ENCODE measurements at regions of chr6 and their contacts with region 1.

Region 1: GRCh38 chr6:84227434-84228197 is at the start of gene CEP162:
- DNase-seq: peak; percentile 88 to 93 (median 90)
- H3K4me3 ChIP-seq: peak within 1 kb of the TSS; percentile 81
- H3K27ac ChIP-seq: peak within 1 kb of the TSS in 1 of 2 donors; percentile 80
- H3K4me1 ChIP-seq: peaks cover 1% of the 10 kb centered on the region
- H3K27me3 ChIP-seq: no peaks in the 10 kb centered on the region
- CTCF ChIP-seq: peak; percentile 50 to 80 (median 66)
- EP300 ChIP-seq: no peak
- POLR2A ChIP-seq: no peak
- total RNA-seq, gene CEP162: 8.3 to 16.8 (median 9.7) TPM

Region 2: GRCh38 chr6:83192871-83193746 is 1034.5 kb before region 1 on chr6 and contains the starts of genes PGM3 and RWDD2A:
- intact Hi-C with region 1: no loop called
- DNase-seq: peak; percentile 88 to 92 (median 90)
- H3K4me3 ChIP-seq: peak within 1 kb of the TSS; percentile 97
- H3K27ac ChIP-seq: peak within 1 kb of the TSS; percentile 64 to 69
- H3K4me1 ChIP-seq: peaks cover 5% of the 10 kb centered on the region
- H3K27me3 ChIP-seq: no peaks in the 10 kb centered on the region
- CTCF ChIP-seq: no peak
- EP300 ChIP-seq: no peak
- POLR2A ChIP-seq: no peak
- total RNA-seq, gene PGM3: 22.4 to 48.5 (median 39.9) TPM
- total RNA-seq, gene RWDD2A: 2.8 to 5.3 (median 4.3) TPM

Region 3: GRCh38 chr6:83884523-83884922 is 343.1 kb before region 1 on chr6:
- intact Hi-C with region 1: loop called in 1 of 4 experiments (anchors 10 kb)
- DNase-seq: no peak
- H3K4me3 ChIP-seq: no peak overlapping the region
- H3K27ac ChIP-seq: no peak overlapping the region
- H3K4me1 ChIP-seq: no peaks in the 10 kb centered on the region
- H3K27me3 ChIP-seq: no peaks in the 10 kb centered on the region
- CTCF ChIP-seq: peak in 2 of 3 donors; percentile 29 to 55
- EP300 ChIP-seq: no peak
- POLR2A ChIP-seq: no peak

Region 4: GRCh38 chr6:83893024-83893423 is 334.6 kb before region 1 on chr6:
- intact Hi-C with region 1: loop called in 2 of 4 experiments (anchors 10 kb)
- DNase-seq: no peak
- H3K4me3 ChIP-seq: no peak overlapping the region
- H3K27ac ChIP-seq: no peak overlapping the region
- H3K4me1 ChIP-seq: no peaks in the 10 kb centered on the region
- H3K27me3 ChIP-seq: no peaks in the 10 kb centered on the region
- CTCF ChIP-seq: no peak
- EP300 ChIP-seq: no peak
- POLR2A ChIP-seq: no peak

Region 5: GRCh38 chr6:84065693-84066290 is 161.8 kb before region 1 on chr6:
- intact Hi-C with region 1: no loop called
- DNase-seq: no peak
- H3K4me3 ChIP-seq: no peak overlapping the region
- H3K27ac ChIP-seq: no peak overlapping the region
- H3K4me1 ChIP-seq: no peaks in the 10 kb centered on the region
- H3K27me3 ChIP-seq: no peaks in the 10 kb centered on the region
- CTCF ChIP-seq: no peak
- EP300 ChIP-seq: no peak
- POLR2A ChIP-seq: no peak

Region 6: GRCh38 chr6:84657486-84657885 is 429.9 kb after region 1 on chr6:
- intact Hi-C with region 1: no loop called
- DNase-seq: no peak
- H3K4me3 ChIP-seq: no peak overlapping the region
- H3K27ac ChIP-seq: no peak overlapping the region
- H3K4me1 ChIP-seq: no peaks in the 10 kb centered on the region
- H3K27me3 ChIP-seq: no peaks in the 10 kb centered on the region
- CTCF ChIP-seq: no peak
- EP300 ChIP-seq: no peak
- POLR2A ChIP-seq: no peak

Region 7: DNA sequence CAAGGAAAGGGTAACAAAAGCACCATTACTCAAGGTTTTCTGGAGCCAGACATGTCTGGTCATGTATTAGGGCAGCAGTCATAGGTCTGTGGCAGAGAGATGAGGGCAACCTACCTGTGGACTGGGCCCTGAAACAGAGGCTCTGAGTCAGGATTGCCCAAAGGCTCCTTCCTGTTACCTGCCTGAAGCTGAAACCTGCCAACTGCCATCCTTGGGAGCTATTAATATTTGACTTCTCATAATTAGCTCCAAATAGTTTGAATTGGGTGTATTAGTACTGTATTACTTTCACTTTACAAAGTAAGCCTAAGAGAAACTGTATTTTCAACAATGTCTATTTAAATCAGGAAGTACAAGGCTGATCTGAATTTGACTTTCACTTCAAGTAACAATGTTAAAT is 608.8 kb after region 1 on chr6:
- intact Hi-C with region 1: no loop called
- DNase-seq: no peak
- H3K4me3 ChIP-seq: no peak overlapping the region
- H3K27ac ChIP-seq: no peak overlapping the region
- H3K4me1 ChIP-seq: no peaks in the 10 kb centered on the region
- H3K27me3 ChIP-seq: no peaks in the 10 kb centered on the region
- CTCF ChIP-seq: no peak
- EP300 ChIP-seq: no peak
- POLR2A ChIP-seq: no peak